IMR-90 (cell line): ENCODE measurements at regions of chr15 and their contacts with region 1.

Region 1: GRCh38 chr15:74906446-74907162 is at the start of gene FAM219B:
- DNase-seq: peak; percentile 83
- ATAC-seq: peak; percentile 93
- H3K4me3 ChIP-seq: peak within 1 kb of the TSS; percentile 89
- H3K27ac ChIP-seq: peak within 1 kb of the TSS; percentile 90
- H3K4me1 ChIP-seq: peaks cover 11% of the 10 kb centered on the region
- H3K27me3 ChIP-seq: no peaks in the 10 kb centered on the region
- CTCF ChIP-seq: no peak
- POLR2A ChIP-seq: peak; percentile 92
- RAD21 ChIP-seq: no peak
- total RNA-seq, gene FAM219B: 20.3 and 24.9 TPM in 2 replicates

Region 2: GRCh38 chr15:74842581-74843444 is 63.8 kb before region 1 on chr15 and contains the start of gene ULK3:
- CTCF ChIA-PET with region 1: interaction called, 4 read pairs
- POLR2A ChIA-PET with region 1: no interaction called
- dilution Hi-C with region 1: no loop called
- in situ Hi-C with region 1: no loop called
- intact Hi-C with region 1: loop called (anchors 5 kb)
- DNase-seq: peak; percentile 73
- ATAC-seq: peak; percentile 98
- H3K4me3 ChIP-seq: peak within 1 kb of the TSS; percentile 91
- H3K27ac ChIP-seq: peak within 1 kb of the TSS; percentile 67
- H3K4me1 ChIP-seq: peaks cover 4% of the 10 kb centered on the region; the same call in 1 of the 2 replicates
- H3K27me3 ChIP-seq: no peaks in the 10 kb centered on the region
- CTCF ChIP-seq: peak; percentile 79
- POLR2A ChIP-seq: no peak
- RAD21 ChIP-seq: peak; percentile 41
- total RNA-seq, gene ULK3: 8.6 and 11.8 TPM in 2 replicates

Region 3: GRCh38 chr15:74873036-74873755 is 33.4 kb before region 1 on chr15 and contains the start of gene SCAMP2:
- CTCF ChIA-PET with region 1: no interaction called
- POLR2A ChIA-PET with region 1: no interaction called
- dilution Hi-C with region 1: no loop called
- in situ Hi-C with region 1: no loop called
- intact Hi-C with region 1: no loop called
- DNase-seq: peak; percentile 94
- ATAC-seq: peak; percentile 99
- H3K4me3 ChIP-seq: peak within 1 kb of the TSS; percentile 80
- H3K27ac ChIP-seq: peak within 1 kb of the TSS; percentile 88
- H3K4me1 ChIP-seq: peaks cover 15% of the 10 kb centered on the region
- H3K27me3 ChIP-seq: no peaks in the 10 kb centered on the region
- CTCF ChIP-seq: no peak
- POLR2A ChIP-seq: peak; percentile 94
- RAD21 ChIP-seq: no peak
- total RNA-seq, gene SCAMP2: 23.3 and 25.8 TPM in 2 replicates

Region 4: DNA sequence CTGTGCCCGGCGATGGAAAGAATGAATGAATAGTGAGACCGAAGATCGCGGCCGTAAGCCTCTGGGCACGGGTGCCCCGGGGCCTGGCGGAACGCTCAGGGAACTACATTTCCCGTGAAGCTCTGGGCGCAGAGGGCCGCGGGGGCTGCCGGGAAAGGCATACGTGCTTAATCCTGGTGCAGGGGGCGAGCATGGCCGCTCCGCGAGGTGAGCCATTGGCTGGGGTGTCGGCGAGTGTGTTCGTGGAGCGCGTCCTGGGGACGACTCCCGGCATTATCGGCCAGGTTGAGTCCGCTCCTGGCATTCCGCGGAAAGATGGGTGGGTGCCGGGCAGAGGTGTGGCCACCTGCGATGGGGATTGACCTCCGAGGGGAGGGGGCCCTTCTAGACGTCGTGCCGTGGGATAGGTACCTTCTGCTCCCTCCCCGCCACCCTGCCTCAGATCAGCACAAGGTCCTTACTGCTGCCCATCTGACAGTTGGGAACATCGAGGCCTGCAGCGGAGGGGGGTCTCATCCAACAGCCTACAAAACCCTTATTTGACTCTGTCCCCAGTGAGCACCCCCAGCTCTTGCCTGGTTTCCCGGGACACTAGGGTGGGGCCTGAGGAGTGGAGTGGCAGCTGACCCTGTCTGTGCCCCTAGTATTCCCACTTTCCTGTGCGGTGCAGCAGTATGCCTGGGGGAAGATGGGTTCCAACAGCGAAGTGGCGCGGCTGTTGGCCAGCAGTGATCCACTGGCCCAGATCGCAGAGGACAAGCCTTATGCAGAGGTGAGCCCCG is 16.5 kb before region 1 on chr15 and contains the start of gene MPI:
- CTCF ChIA-PET with region 1: interaction called, 7 read pairs
- POLR2A ChIA-PET with region 1: no interaction called
- dilution Hi-C with region 1: no loop called
- in situ Hi-C with region 1: no loop called
- intact Hi-C with region 1: loop called (anchors 1 kb)
- DNase-seq: peak; percentile 68
- ATAC-seq: peak; percentile 99
- H3K4me3 ChIP-seq: peak within 1 kb of the TSS; percentile 73
- H3K27ac ChIP-seq: peak within 1 kb of the TSS; percentile 84
- H3K4me1 ChIP-seq: peaks cover 9% of the 10 kb centered on the region
- H3K27me3 ChIP-seq: no peaks in the 10 kb centered on the region
- CTCF ChIP-seq: no peak
- POLR2A ChIP-seq: peak; percentile 83
- RAD21 ChIP-seq: no peak
- total RNA-seq, gene MPI: 61.4 and 91.8 TPM in 2 replicates

Region 5: GRCh38 chr15:74950078-74951000 is 43.7 kb after region 1 on chr15:
- CTCF ChIA-PET with region 1: no interaction called
- POLR2A ChIA-PET with region 1: no interaction called
- dilution Hi-C with region 1: no loop called
- in situ Hi-C with region 1: no loop called
- intact Hi-C with region 1: loop called (anchors 1 kb)
- DNase-seq: peak; percentile 67
- ATAC-seq: peak; percentile 70
- H3K4me3 ChIP-seq: no peak overlapping the region
- H3K27ac ChIP-seq: no peak overlapping the region
- H3K4me1 ChIP-seq: peaks cover 5% of the 10 kb centered on the region; the same call in 1 of the 2 replicates
- H3K27me3 ChIP-seq: peaks cover 3% of the 10 kb centered on the region
- CTCF ChIP-seq: peak; percentile 97
- POLR2A ChIP-seq: no peak; the same call in 1 of the 2 replicates
- RAD21 ChIP-seq: peak; percentile 94

Region 6: DNA sequence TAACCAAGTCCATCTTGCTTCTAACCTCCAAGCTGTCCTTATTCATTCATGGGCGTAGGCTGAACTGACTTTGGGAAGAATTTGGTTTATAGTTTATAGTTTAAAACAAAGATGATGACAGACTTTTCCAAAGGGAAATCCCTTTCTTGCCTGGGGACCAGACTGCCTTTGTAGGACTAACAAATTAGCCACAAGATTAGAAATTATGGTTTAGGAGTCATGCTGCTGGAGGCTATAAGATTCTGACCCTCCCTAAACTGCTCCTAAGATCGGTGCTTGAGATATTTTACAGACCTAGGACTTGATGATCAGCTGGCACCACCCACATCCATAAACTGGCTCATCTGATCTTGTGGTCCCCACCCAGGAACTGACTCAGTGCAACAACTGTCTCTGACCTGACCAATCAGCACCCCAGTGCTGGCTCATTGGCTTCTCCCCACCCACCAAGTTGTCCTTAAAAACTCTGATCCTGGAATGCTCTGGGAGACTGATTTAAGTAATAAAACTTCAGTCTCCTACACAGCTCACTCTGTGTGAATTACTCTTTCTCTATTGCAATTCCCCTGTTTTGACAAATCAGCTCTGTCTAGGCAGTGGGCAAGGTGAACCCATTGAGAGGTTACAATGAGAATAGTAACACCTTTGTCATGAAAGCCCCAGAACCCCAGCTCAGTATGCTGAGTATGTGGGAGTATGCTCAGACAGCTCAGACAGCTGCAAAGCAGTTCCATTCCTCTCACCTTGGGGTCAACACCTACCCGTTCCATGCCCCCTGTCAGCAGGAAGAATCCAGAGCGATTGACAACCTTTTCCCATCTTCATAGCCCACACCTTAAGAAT is 243.5 kb after region 1 on chr15:
- CTCF ChIA-PET with region 1: no interaction called
- POLR2A ChIA-PET with region 1: no interaction called
- dilution Hi-C with region 1: no loop called
- in situ Hi-C with region 1: no loop called
- intact Hi-C with region 1: no loop called
- DNase-seq: peak; percentile 38
- ATAC-seq: peak; percentile 68
- H3K4me3 ChIP-seq: no peak overlapping the region
- H3K27ac ChIP-seq: no peak overlapping the region
- H3K4me1 ChIP-seq: no peaks in the 10 kb centered on the region
- H3K27me3 ChIP-seq: no peaks in the 10 kb centered on the region; the same call in 1 of the 2 replicates
- CTCF ChIP-seq: no peak
- POLR2A ChIP-seq: no peak
- RAD21 ChIP-seq: no peak